ENCODE measurements at regions of chr2 and their contacts with region 1.

Region 1: DNA sequence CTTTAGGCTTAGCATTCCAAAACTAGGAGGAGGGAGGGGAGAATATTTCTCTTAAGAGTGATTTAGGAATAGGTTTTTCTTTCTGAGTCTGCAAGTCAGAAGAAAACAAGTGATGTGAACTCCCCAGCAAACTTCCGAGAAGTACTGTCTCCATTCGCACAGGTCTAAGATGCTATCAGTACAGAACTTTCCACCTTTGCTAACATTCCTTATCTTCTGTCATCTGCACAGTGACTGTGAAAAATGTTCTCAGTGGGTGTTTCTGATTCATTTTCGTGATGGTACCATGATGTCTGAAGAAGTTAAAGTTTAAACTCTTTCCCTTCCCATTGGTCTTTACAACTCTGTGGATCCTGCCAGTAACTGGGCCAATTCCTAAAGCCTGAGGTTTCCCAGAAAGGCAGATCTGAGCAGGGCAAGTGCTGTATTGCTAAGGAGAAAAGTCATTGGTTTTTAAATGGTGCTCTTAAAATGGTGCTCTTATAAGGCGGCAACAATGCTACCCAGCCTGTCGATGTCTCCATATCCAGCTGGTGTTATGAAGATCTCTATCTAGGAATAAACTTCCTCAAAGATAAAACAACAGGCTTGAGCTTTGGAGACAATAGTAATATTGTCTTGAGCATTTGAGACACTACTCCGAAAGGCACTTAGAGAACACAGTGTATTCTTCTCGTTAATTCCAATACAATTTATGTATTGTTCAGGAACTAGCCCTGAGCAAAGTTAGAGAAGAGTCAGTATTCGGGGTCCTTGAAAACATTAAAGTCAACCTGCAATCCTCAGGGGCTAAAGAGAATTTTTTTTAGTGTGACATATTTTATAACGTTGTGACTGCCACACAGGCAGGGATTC is 232.4 kb downstream of the OSR1 start:
- DNase-seq: no peak
- H3K4me3 ChIP-seq: no peak overlapping the region
- H3K27ac ChIP-seq: no peak overlapping the region
- H3K4me1 ChIP-seq: no peaks in the 10 kb centered on the region
- H3K27me3 ChIP-seq: no peaks in the 10 kb centered on the region
- CTCF ChIP-seq: no peak

Region 2: GRCh38 chr2:18643326-18644114 is 482.5 kb before region 1 on chr2:
- CTCF ChIA-PET with region 1: interaction called, 10 read pairs
- POLR2A ChIA-PET with region 1: no interaction called
- intact Hi-C with region 1: no loop called
- DNase-seq: no peak
- H3K4me3 ChIP-seq: no peak overlapping the region
- H3K27ac ChIP-seq: no peak overlapping the region
- H3K4me1 ChIP-seq: no peaks in the 10 kb centered on the region
- H3K27me3 ChIP-seq: no peaks in the 10 kb centered on the region
- CTCF ChIP-seq: no peak

Region 3: GRCh38 chr2:19187323-19188020 is 61.4 kb after region 1 on chr2:
- CTCF ChIA-PET with region 1: no interaction called
- POLR2A ChIA-PET with region 1: no interaction called
- intact Hi-C with region 1: no loop called
- DNase-seq: no peak
- H3K4me3 ChIP-seq: no peak overlapping the region
- H3K27ac ChIP-seq: no peak overlapping the region
- H3K4me1 ChIP-seq: no peaks in the 10 kb centered on the region
- H3K27me3 ChIP-seq: peaks cover 3% of the 10 kb centered on the region
- CTCF ChIP-seq: no peak

Region 4: GRCh38 chr2:19312949-19313348 is 186.9 kb after region 1 on chr2:
- CTCF ChIA-PET with region 1: no interaction called
- POLR2A ChIA-PET with region 1: no interaction called
- intact Hi-C with region 1: no loop called
- DNase-seq: peak; percentile 19
- H3K4me3 ChIP-seq: no peak overlapping the region
- H3K27ac ChIP-seq: no peak overlapping the region
- H3K4me1 ChIP-seq: no peaks in the 10 kb centered on the region
- H3K27me3 ChIP-seq: no peaks in the 10 kb centered on the region
- CTCF ChIP-seq: peak; percentile 38; the same call in 1 of the 2 replicates